ENCODE measurements at regions of chr1 and their contacts with region 1.

Region 1: GRCh38 chr1:218284934-218285635 is at the start of gene RRP15:
- DNase-seq: peak; percentile 92
- H3K4me3 Mint-ChIP-seq: peak within 1 kb of the TSS; percentile 95
- H3K27ac Mint-ChIP-seq: peak within 1 kb of the TSS; percentile 83
- H3K4me1 Mint-ChIP-seq: peaks cover 26% of the 10 kb centered on the region
- H3K27me3 Mint-ChIP-seq: peaks cover 6% of the 10 kb centered on the region
- total RNA-seq, gene RRP15: 12.6 to 13.7 TPM

Region 2: DNA sequence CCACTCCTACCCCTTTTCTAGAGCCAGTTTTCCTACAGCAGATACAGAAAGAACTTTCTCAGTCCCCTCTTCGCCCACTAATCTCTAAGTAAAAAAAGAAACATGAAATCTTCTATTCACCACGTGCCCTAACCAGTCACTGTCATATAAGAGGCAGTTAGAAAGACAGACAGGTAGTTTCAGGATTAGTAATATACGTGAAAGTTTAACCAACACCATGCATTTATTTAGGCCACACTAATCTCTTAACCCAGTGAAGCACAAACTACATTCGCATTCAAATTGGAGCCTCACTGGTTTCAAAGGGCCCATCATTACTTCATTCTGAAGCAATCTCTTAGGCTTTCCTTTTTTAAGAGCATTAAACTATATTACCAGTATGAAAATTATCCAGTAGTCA is 664.3 kb before region 1 on chr1:
- CTCF ChIA-PET with region 1: no interaction called
- intact Hi-C with region 1: loop called (anchors 10 kb)
- DNase-seq: no peak
- H3K4me3 Mint-ChIP-seq: no peak overlapping the region
- H3K27ac Mint-ChIP-seq: no peak overlapping the region
- H3K4me1 Mint-ChIP-seq: peaks cover 33% of the 10 kb centered on the region
- H3K27me3 Mint-ChIP-seq: no peaks in the 10 kb centered on the region

Region 3: DNA sequence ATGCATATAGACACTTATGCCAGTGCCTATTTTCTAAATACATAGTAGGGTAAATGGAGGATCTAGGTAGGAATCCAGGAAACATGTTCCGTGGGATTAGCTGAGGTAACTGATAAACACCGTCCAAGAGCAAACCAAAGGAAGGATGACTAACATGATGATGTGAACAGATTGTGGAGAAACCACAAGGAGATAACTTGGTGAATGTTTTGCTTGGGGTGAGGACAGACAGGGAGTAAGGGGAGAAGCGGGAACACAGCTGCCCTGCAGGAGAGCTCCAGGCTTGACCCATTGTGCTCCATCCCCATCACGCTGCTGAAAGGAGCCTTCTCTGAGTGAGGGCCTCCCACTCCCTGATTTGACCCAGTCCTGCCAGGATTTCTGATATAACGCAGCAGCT is 1414.8 kb after region 1 on chr1:
- CTCF ChIA-PET with region 1: no interaction called
- intact Hi-C with region 1: no loop called
- DNase-seq: no peak
- H3K4me3 Mint-ChIP-seq: no peak overlapping the region
- H3K27ac Mint-ChIP-seq: no peak overlapping the region
- H3K4me1 Mint-ChIP-seq: no peaks in the 10 kb centered on the region
- H3K27me3 Mint-ChIP-seq: no peaks in the 10 kb centered on the region

Region 4: GRCh38 chr1:220089650-220090556 is 1804.8 kb after region 1 on chr1 and contains the start of gene BPNT1:
- CTCF ChIA-PET with region 1: no interaction called
- intact Hi-C with region 1: loop called (anchors 1 kb)
- DNase-seq: peak; percentile 100
- H3K4me3 Mint-ChIP-seq: peak within 1 kb of the TSS; percentile 91
- H3K27ac Mint-ChIP-seq: peak within 1 kb of the TSS; percentile 85
- H3K4me1 Mint-ChIP-seq: peaks cover 12% of the 10 kb centered on the region
- H3K27me3 Mint-ChIP-seq: no peaks in the 10 kb centered on the region
- total RNA-seq, gene BPNT1: 18.5 to 21.3 TPM